ENCODE measurements at regions of chr5 and their contacts with region 1.

Region 1: DNA sequence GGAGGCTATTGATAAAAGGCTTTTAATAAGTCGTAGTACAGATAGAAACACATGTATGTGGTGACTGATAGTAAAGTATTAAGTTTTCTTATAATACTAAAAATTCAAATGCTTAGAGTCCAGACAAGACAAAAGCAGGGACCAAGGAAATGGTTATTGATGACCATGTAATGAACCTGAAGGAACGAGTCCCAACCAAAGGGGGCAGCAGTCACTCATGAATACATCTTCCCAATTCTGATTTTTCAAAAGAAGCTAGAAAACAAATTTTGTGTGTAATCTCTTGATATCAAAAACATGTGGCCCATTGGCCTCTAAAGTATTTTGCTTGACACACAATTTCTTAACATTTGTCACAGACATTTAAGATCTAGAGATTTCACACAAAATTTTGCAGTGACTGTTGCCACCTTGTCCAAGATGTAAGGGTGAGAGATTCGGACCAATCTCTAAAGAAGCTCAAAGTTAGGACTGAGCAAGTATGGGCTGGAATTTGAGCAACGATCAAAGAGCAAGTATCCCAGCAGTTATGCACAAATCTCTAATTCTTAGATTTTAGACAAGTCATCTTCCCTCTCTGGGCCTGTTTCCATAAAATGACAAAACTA is 66.8 kb downstream of the ARL15 start:
- DNase-seq: peak; percentile 27
- ATAC-seq: peak; percentile 72
- H3K4me3 ChIP-seq: no peak overlapping the region
- H3K27ac ChIP-seq: no peak overlapping the region
- H3K4me1 ChIP-seq: no peaks in the 10 kb centered on the region
- H3K27me3 ChIP-seq: no peaks in the 10 kb centered on the region
- CTCF ChIP-seq: peak; percentile 59 to 77 (median 60)
- POLR2A ChIP-seq: no peak
- RAD21 ChIP-seq: peak; percentile 77

Region 2: GRCh38 chr5:54415896-54416601 is 172.5 kb after region 1 on chr5:
- CTCF ChIA-PET with region 1: interaction called, 26 read pairs
- POLR2A ChIA-PET with region 1: no interaction called
- RAD21 ChIA-PET with region 1: interaction called in 1 of 2 experiments, 8 read pairs
- intact Hi-C with region 1: loop called (anchors 1 kb)
- DNase-seq: no peak
- ATAC-seq: no peak; the same call in 1 of the 2 replicates
- H3K4me3 ChIP-seq: no peak overlapping the region
- H3K27ac ChIP-seq: no peak overlapping the region
- H3K4me1 ChIP-seq: peaks cover 0 to 5% of the 10 kb centered on the region in 2 experiments; a peak in 1 of 4 replicates
- H3K27me3 ChIP-seq: no peaks in the 10 kb centered on the region
- CTCF ChIP-seq: no peak
- POLR2A ChIP-seq: no peak
- RAD21 ChIP-seq: no peak

Region 3: GRCh38 chr5:54480296-54480695 is 236.7 kb after region 1 on chr5:
- CTCF ChIA-PET with region 1: no interaction called
- POLR2A ChIA-PET with region 1: no interaction called
- RAD21 ChIA-PET with region 1: no interaction called
- intact Hi-C with region 1: no loop called
- DNase-seq: no peak
- ATAC-seq: no peak
- H3K4me3 ChIP-seq: no peak overlapping the region
- H3K27ac ChIP-seq: no peak overlapping the region
- H3K4me1 ChIP-seq: no peaks in the 10 kb centered on the region
- H3K27me3 ChIP-seq: no peaks in the 10 kb centered on the region
- CTCF ChIP-seq: no peak
- POLR2A ChIP-seq: no peak
- RAD21 ChIP-seq: no peak

Region 4: GRCh38 chr5:54517174-54518092 is 273.9 kb after region 1 on chr5 and contains the start of gene SNX18:
- CTCF ChIA-PET with region 1: interaction called, 20 read pairs
- POLR2A ChIA-PET with region 1: no interaction called
- RAD21 ChIA-PET with region 1: interaction called, 3 to 8 read pairs
- intact Hi-C with region 1: loop called (anchors 1 kb)
- DNase-seq: peak; percentile 74
- ATAC-seq: peak; percentile 88
- H3K4me3 ChIP-seq: peak within 1 kb of the TSS; percentile 65 to 70
- H3K27ac ChIP-seq: peak within 1 kb of the TSS; percentile 78
- H3K4me1 ChIP-seq: peaks cover 2 to 16% of the 10 kb centered on the region in 2 experiments; a peak in 1 of 4 replicates
- H3K27me3 ChIP-seq: no peaks in the 10 kb centered on the region
- CTCF ChIP-seq: peak; percentile 89 to 95 (median 92)
- POLR2A ChIP-seq: peak; percentile 71
- RAD21 ChIP-seq: peak; percentile 93
- total RNA-seq, gene SNX18: 16.0 TPM

Region 5: DNA sequence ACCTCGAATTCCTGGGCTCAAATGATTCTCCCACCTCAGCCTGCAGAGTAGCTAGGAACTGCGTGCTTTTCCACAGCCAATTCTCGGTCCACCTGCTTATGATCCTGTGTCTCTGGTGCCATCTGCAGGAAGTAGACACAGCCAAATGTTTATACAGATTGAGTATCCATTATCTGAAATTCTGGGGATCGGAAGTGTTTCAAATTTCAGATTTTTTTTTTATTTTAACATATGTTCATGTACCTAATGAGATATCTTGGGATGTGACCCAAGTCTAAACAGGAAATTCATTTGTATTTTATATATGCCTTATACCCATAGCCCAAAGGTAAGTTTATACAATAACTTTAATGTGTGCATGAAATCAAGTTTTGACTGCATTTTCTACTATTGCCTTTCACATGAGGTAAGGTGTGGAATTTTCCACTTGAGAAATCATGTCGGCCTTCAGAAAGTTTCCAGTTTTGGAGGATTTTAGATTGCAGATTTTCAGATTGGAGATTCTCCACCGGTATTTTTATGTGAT is 652.3 kb after region 1 on chr5:
- CTCF ChIA-PET with region 1: interaction called, 14 read pairs
- POLR2A ChIA-PET with region 1: no interaction called
- RAD21 ChIA-PET with region 1: interaction called in 1 of 2 experiments, 3 read pairs
- intact Hi-C with region 1: loop called (anchors 10 kb)
- DNase-seq: peak; percentile 39
- ATAC-seq: peak; percentile 90
- H3K4me3 ChIP-seq: no peak overlapping the region
- H3K27ac ChIP-seq: no peak overlapping the region
- H3K4me1 ChIP-seq: no peaks in the 10 kb centered on the region
- H3K27me3 ChIP-seq: peaks cover 39% of the 10 kb centered on the region
- CTCF ChIP-seq: peak; percentile 51 to 60 (median 59); a peak in 5 of 6 replicates
- POLR2A ChIP-seq: no peak
- RAD21 ChIP-seq: peak; percentile 74

Region 6: GRCh38 chr5:55146543-55147151 is 903.1 kb after region 1 on chr5:
- CTCF ChIA-PET with region 1: no interaction called
- POLR2A ChIA-PET with region 1: no interaction called
- RAD21 ChIA-PET with region 1: no interaction called
- intact Hi-C with region 1: loop called (anchors 10 kb)
- DNase-seq: peak; percentile 82
- ATAC-seq: peak; percentile 99
- H3K4me3 ChIP-seq: no peak overlapping the region
- H3K27ac ChIP-seq: no peak overlapping the region
- H3K4me1 ChIP-seq: peaks cover 0 to 7% of the 10 kb centered on the region in 2 experiments; a peak in 2 of 4 replicates
- H3K27me3 ChIP-seq: peaks cover 18% of the 10 kb centered on the region
- CTCF ChIP-seq: peak; percentile 81 to 95 (median 95)
- POLR2A ChIP-seq: no peak
- RAD21 ChIP-seq: peak; percentile 93

Measured in HCT116 (cell line).